Dendritic cell treated with granulocyte-macrophage colony-stimulating factor and Interleukin-4, amounts not matched to agents 40 ng/mL and 50 ng/mL, for 4 days (primary cell): ENCODE measurements at regions of chr1 and their contacts with region 1.

Region 1: DNA sequence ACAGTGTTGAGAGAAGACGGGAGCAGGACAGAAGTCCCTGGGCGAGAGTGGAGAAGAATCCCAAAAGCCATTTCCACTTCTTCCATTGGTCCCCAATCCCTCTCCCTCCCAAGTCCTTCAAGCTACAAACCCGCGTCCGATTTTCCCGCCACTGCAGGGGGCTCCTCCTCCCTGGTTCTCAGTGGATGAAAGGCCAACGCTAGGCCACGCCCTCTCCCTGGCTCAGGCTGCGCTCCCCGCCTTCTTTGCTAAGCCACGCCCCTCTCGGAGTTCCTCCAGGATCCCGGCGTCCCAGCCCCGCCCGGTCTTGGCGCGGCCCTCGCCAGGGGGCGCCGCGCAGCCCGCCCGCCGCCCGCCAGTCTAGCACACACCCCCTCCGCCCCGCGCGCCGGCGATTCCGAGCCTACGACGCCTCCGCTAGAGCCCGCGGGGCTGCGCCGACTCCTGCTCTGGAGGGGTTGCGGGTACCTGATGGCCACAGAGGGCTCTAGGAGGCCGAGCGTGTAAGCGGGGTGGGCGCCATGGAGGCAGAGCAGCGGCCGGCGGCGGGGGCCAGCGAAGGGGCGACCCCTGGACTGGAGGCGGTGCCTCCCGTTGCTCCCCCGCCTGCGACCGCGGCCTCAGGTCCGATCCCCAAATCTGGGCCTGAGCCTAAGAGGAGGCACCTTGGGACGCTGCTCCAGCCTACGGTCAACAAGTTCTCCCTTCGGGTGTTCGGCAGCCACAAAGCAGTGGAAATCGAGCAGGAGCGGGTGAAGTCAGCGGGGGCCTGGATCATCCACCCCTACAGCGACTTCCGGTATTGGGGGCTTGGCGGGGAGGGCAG is at the start of gene HCN3:
- H3K4me3 Mint-ChIP-seq: peak within 1 kb of the TSS; percentile 86
- H3K27ac Mint-ChIP-seq: peak within 1 kb of the TSS; percentile 48
- H3K4me1 Mint-ChIP-seq: peaks cover 36% of the 10 kb centered on the region
- H3K27me3 Mint-ChIP-seq: peaks cover 16% of the 10 kb centered on the region

Region 2: GRCh38 chr1:155261852-155262673 is 15.2 kb before region 1 on chr1 and contains the start of gene SCAMP3:
- intact Hi-C with region 1: loop called (anchors 1 kb)
- H3K4me3 Mint-ChIP-seq: peak within 1 kb of the TSS; percentile 95
- H3K27ac Mint-ChIP-seq: peak within 1 kb of the TSS; percentile 93
- H3K4me1 Mint-ChIP-seq: peaks cover 39% of the 10 kb centered on the region
- H3K27me3 Mint-ChIP-seq: no peaks in the 10 kb centered on the region

Region 3: DNA sequence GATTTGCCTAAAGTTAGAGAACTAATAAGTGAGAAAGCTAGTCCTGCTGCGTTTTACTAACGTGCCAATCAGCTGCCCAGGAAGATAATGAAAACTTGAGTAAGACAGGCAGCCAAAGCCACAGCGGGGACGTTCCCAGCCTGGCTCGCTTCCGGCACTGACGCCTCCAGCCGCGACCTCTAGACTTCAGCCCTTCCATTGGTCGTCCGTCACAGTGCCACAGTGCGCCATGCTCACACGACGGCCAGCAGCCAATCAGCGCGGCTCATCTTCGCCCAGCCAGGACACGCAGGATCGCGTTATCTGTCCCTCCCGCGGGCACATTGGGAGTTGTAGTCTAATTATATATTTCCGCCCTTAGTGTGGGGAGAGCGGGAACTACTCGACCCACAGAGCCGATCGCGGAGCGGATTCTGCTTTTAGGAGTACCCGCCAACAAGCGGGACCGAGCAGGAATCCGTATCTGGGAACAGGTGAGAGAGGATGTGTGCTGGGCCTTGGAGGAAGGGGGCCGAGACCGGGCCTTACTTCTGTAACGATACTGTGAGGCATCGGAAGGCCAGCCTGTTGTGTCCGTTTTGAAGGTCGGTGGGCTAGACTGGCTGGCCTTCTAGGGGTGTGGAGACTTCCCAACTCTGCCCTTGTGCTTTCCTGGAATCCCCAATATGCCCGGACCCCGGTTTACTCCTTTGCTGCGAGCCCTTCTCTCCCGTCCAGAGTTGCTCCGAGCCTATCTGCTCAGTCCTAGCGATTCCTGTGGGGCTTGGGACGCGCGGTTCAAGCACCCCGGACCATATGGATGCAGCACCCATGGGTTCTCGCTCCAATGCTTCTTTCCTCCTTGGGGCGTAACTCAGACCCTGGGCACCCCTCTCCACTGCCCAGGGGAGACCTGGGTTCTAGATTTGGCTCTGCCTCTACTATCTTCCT is 31.5 kb after region 1 on chr1 and contains the start of gene FDPS:
- intact Hi-C with region 1: loop called (anchors 1 kb)
- H3K4me3 Mint-ChIP-seq: peak within 1 kb of the TSS; percentile 95
- H3K27ac Mint-ChIP-seq: peak within 1 kb of the TSS; percentile 94
- H3K4me1 Mint-ChIP-seq: peaks cover 38% of the 10 kb centered on the region
- H3K27me3 Mint-ChIP-seq: peaks cover 2% of the 10 kb centered on the region

Region 4: GRCh38 chr1:155323798-155324610 is 46.7 kb after region 1 on chr1:
- intact Hi-C with region 1: loop called (anchors 1 kb)
- H3K4me3 Mint-ChIP-seq: peak overlapping the region; percentile 92
- H3K27ac Mint-ChIP-seq: peak overlapping the region; percentile 89
- H3K4me1 Mint-ChIP-seq: peaks cover 58% of the 10 kb centered on the region
- H3K27me3 Mint-ChIP-seq: peaks cover 6% of the 10 kb centered on the region

Region 5: DNA sequence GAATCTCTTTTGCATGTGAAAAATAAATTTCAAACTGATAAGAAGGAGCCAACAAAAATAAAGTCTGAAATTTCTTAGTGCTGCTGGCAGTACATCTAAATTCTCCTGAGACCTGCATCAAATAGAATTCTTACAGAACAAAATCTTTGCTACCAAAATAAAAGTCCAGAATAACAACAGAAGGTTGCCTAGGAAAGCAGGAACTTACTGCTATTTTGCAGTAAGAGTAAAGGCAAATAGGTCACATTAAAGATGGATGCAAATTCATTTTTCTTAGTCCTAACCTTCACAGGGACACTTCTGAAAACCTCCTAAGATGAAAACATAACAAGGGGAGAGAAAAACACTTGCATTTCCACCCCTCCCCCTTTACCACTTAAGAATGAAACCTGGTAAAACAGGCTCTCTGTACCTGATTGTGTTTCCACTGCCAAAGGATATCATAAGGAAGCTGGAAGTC is 102.4 kb after region 1 on chr1:
- intact Hi-C with region 1: no loop called
- H3K4me3 Mint-ChIP-seq: no peak overlapping the region
- H3K27ac Mint-ChIP-seq: no peak overlapping the region
- H3K4me1 Mint-ChIP-seq: peaks cover 7% of the 10 kb centered on the region
- H3K27me3 Mint-ChIP-seq: no peaks in the 10 kb centered on the region

Region 6: GRCh38 chr1:155859234-155859829 is 582.0 kb after region 1 on chr1 and contains the start of gene SYT11:
- intact Hi-C with region 1: loop called (anchors 10 kb)
- H3K4me3 Mint-ChIP-seq: peak within 1 kb of the TSS; percentile 75
- H3K27ac Mint-ChIP-seq: peak within 1 kb of the TSS; percentile 91
- H3K4me1 Mint-ChIP-seq: peaks cover 39% of the 10 kb centered on the region
- H3K27me3 Mint-ChIP-seq: no peaks in the 10 kb centered on the region